ENCODE measurements at regions of chr14 and their contacts with region 1.

Region 1: DNA sequence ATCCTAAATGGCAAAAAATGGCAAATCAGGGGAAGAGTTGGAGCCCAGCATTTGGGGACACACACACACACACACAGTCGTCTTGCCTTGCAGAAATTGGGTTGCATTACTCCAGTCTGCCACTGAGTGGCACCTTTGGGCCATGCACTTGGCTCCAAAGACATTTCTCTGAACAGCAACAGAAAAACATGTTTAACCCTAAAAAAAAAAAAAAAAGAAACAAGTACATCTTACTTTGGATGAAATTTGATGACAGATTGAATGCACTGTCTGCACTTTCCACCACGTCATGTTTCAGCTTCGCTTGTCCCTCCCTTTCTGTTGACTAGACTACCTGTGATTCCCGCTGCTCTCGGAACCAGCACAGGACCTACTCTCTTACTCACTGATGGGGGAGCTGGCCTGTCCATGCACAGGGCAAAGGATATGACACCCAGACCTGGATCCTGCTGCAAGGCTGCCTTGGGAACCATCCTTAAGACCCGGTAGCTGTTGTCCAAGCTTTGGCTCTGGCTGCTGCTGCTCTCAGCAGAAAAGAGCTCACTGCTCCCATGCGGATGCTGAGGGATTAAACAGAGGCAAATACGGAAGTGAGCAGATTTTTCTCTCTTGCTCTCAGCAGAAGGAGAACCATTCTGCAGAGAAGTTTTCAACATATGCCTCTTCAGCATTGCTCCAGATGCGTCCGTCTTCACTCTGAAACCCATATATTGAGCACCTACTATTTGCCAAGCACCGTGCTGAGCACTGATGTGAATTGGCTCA is 376.8 kb downstream of the DPF3 start:
- DNase-seq: peak; percentile 38
- H3K4me3 ChIP-seq: no peak overlapping the region
- H3K27ac ChIP-seq: no peak overlapping the region
- H3K4me1 ChIP-seq: no peaks in the 10 kb centered on the region
- H3K27me3 ChIP-seq: no peaks in the 10 kb centered on the region
- CTCF ChIP-seq: peak; percentile 49 to 84 (median 70)
- POLR2A ChIP-seq: no peak

Region 2: GRCh38 chr14:72503696-72504368 is 13.3 kb before region 1 on chr14:
- intact Hi-C with region 1: no loop called
- DNase-seq: no peak
- H3K4me3 ChIP-seq: no peak overlapping the region
- H3K27ac ChIP-seq: no peak overlapping the region
- H3K4me1 ChIP-seq: no peaks in the 10 kb centered on the region
- H3K27me3 ChIP-seq: no peaks in the 10 kb centered on the region
- CTCF ChIP-seq: no peak
- POLR2A ChIP-seq: no peak

Region 3: DNA sequence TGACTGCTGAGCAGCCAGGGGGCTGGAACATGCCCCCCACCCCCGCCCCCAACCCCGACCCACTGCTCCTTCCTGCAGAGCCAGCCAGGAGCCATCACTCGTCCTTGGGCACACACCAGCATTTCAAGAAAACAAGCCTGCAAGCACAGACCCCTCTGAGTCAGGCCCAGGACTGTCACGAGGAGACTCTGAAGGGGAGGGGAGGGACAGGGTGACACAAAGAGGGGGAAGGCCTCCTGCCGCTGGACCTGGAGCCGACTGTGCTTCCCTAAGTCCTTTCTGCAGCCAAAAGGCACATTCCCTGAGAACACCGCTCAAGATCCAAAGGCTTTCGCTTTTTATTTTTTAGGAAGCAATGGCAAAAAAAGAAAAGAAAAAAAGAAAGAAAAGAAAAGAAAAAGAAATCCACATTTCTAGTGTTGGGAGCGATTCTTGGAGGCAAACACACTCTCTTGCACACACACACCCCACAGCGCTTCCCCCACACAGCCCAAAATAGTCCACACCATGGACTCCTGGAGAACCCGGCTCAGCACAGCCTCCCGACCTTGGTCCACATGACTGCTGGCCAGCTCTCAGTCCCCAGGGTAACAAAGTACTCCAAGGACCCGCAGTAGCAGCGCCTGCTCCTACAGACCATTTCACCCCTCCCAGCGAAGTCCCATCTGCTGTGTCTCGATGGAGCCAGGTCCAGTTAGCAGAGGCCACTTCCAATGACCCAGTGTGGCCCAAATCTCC is 275.1 kb after region 1 on chr14:
- intact Hi-C with region 1: no loop called
- DNase-seq: no peak
- H3K4me3 ChIP-seq: no peak overlapping the region
- H3K27ac ChIP-seq: no peak overlapping the region
- H3K4me1 ChIP-seq: no peaks in the 10 kb centered on the region
- H3K27me3 ChIP-seq: no peaks in the 10 kb centered on the region
- CTCF ChIP-seq: no peak
- POLR2A ChIP-seq: no peak

Region 4: DNA sequence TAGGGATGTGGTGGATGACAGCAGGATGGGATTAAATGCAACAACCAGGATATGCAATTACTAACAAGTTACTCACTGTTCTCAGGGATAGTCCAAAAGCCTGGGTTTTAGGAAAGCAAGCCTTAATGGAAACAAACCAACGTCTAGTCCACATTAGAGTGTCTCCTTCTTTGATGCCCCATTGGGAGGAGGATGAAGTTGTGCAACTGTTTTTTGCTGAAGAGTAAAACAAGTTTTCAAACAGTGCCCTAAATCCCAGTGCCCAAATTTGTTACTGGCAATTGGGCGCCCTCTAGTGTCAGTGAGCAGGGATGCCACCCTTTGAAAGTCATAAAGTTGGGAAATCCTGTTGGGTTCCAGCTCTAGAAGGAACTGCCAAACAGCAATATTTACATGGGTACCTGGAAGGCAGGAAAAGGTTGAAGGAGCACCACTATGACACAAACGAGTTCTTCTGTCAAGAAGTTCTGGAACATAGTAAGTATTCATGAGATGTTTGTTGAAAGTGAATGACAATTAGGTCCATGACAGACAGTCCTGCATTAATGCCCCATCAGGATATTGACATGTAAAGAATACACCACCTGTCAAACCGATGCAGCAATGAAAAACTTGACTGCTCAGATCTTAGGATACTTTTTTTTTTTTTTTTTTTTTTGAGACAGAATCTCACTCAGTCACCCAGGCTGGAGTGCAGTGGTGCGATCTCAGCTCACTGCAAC is 387.9 kb after region 1 on chr14:
- intact Hi-C with region 1: loop called (anchors 1 kb)
- DNase-seq: peak; percentile 63
- H3K4me3 ChIP-seq: no peak overlapping the region
- H3K27ac ChIP-seq: no peak overlapping the region
- H3K4me1 ChIP-seq: no peaks in the 10 kb centered on the region
- H3K27me3 ChIP-seq: no peaks in the 10 kb centered on the region
- CTCF ChIP-seq: peak; percentile 54 to 91 (median 90)
- POLR2A ChIP-seq: no peak

Region 5: GRCh38 chr14:72948481-72949138 is 431.5 kb after region 1 on chr14:
- intact Hi-C with region 1: loop called (anchors 2 kb)
- DNase-seq: peak; percentile 43
- H3K4me3 ChIP-seq: no peak overlapping the region
- H3K27ac ChIP-seq: no peak overlapping the region
- H3K4me1 ChIP-seq: no peaks in the 10 kb centered on the region
- H3K27me3 ChIP-seq: no peaks in the 10 kb centered on the region
- CTCF ChIP-seq: peak; percentile 57 to 78 (median 66)
- POLR2A ChIP-seq: no peak